ENCODE measurements at regions of chr6 and their contacts with region 1.

Region 1: DNA sequence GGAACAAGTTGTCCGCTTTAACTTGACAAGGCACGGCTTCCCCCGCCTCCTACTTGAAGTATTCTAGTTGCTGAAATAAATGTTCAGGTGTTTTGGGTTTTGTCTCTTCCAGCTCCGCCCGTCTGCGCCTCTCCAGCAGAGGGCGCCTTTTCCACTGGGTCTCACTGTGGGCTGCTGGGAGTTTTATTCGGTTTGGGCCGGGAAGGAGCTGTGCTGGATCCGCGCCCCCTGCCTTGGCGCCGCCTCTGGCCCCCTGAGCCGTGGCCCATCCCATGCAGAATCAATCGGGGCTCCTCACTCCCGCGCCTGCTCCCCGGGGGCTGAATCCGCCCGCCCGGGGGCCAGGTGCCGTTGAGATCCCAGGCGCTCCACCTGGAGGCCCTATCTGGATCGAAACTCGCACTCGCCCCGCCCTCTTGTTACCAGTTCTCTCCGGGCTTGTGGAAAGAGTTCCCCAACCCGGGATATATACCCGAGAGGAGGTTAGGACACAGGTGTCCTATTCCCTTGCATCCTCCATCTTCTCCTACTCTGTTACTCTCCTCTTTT is 51.0 kb upstream of the TCF21 start:
- DNase-seq: peak; percentile 90
- ATAC-seq: peak; percentile 96
- H3K4me3 Mint-ChIP-seq: peak overlapping the region; percentile 66
- H3K27ac Mint-ChIP-seq: peak overlapping the region; percentile 91
- H3K4me1 Mint-ChIP-seq: peaks cover 26% of the 10 kb centered on the region
- H3K27me3 Mint-ChIP-seq: no peaks in the 10 kb centered on the region
- CTCF ChIP-seq: peak; percentile 90

Region 2: DNA sequence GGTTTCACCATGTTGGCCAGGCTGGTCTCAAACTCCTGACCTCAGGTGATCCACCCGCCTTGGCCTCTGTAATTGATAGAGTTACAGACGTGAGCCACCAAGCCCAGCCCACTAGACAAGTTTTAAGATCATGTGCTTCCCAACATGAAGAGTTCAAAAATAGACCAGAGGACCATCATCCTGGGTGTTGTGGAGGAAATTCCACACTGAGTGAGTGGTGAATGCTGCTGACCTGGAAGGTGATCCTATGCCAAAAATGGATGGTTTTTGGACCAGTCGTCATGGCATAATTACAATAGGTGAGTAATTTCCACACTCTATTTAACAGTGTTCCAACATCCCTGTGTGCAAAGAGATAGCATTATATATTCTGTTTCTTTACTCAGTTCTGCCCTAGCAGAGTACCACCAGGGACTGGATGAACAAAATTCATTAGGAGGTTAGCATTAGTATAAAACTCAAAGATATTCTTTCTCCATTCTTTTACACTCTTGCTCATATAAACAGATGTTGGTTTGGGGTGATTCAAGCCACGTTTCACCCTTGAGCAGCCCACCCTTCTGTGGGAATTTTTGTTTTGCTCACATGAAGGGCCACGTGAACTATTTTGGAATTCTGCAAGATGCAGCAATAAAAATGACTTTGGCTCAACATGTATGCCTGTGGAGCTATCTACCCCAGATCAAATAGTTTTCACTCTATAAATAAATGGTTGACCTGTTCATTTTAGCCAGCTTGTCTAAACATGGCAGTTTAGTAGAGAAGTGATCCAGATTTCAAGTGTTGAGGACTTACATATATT is 155.2 kb before region 1 on chr6:
- CTCF ChIA-PET with region 1: interaction called, 11 read pairs
- POLR2A ChIA-PET with region 1: no interaction called
- DNase-seq: no peak
- ATAC-seq: no peak
- H3K4me3 Mint-ChIP-seq: peak overlapping the region; percentile 14; the same call in 1 of the 2 replicates
- H3K27ac Mint-ChIP-seq: peak overlapping the region; percentile 97
- H3K4me1 Mint-ChIP-seq: peaks cover 43% of the 10 kb centered on the region
- H3K27me3 Mint-ChIP-seq: no peaks in the 10 kb centered on the region
- CTCF ChIP-seq: no peak

Region 3: GRCh38 chr6:133827766-133828165 is 10.1 kb before region 1 on chr6:
- CTCF ChIA-PET with region 1: interaction called, 10 read pairs
- POLR2A ChIA-PET with region 1: no interaction called
- DNase-seq: no peak
- ATAC-seq: no peak
- H3K4me3 Mint-ChIP-seq: no peak overlapping the region
- H3K27ac Mint-ChIP-seq: no peak overlapping the region
- H3K4me1 Mint-ChIP-seq: no peaks in the 10 kb centered on the region
- H3K27me3 Mint-ChIP-seq: no peaks in the 10 kb centered on the region
- CTCF ChIP-seq: no peak

Region 4: DNA sequence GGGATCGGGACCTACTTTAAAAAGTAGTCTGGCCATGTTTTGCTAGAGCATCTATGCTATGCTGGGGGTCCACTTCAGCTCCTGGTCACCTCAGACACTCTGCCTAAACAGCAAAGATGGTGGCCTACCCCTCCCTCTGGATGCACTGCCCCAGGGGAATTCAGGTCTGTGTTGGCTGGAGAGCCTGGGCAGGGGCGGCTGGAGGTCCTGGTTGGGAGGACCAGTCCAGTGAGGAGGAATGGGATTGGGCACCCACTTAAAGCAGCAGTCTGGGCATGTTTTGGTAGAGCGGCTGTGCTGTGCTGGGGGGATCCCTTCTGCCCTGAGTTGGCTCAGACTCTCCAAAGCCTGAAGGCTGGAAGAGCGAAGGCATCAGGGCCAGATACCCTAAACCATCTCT is 27.8 kb after region 1 on chr6:
- CTCF ChIA-PET with region 1: no interaction called
- POLR2A ChIA-PET with region 1: no interaction called
- DNase-seq: no peak
- ATAC-seq: no peak
- H3K4me3 Mint-ChIP-seq: no peak overlapping the region
- H3K27ac Mint-ChIP-seq: no peak overlapping the region
- H3K4me1 Mint-ChIP-seq: no peaks in the 10 kb centered on the region
- H3K27me3 Mint-ChIP-seq: peaks cover 3% of the 10 kb centered on the region
- CTCF ChIP-seq: no peak

Region 5: GRCh38 chr6:133891149-133891926 is 53.5 kb after region 1 on chr6:
- CTCF ChIA-PET with region 1: interaction called, 24 read pairs
- POLR2A ChIA-PET with region 1: interaction called, 4 read pairs
- DNase-seq: peak; percentile 64
- ATAC-seq: peak; percentile 12
- H3K4me3 Mint-ChIP-seq: peak overlapping the region; percentile 70
- H3K27ac Mint-ChIP-seq: no peak overlapping the region
- H3K4me1 Mint-ChIP-seq: peaks cover 49% of the 10 kb centered on the region
- H3K27me3 Mint-ChIP-seq: peaks cover 100% of the 10 kb centered on the region
- CTCF ChIP-seq: no peak

Measured in WTC11 (cell line).